ENCODE measurements at regions of chr2 and their contacts with region 1.

Region 1: GRCh38 chr2:48946449-48947048 is 191.0 kb upstream of the LHCGR start:
- DNase-seq: peak; percentile 54 to 77 (median 68)
- ATAC-seq: peak; percentile 93
- H3K4me3 ChIP-seq: no peak overlapping the region
- H3K27ac ChIP-seq: no peak overlapping the region
- H3K4me1 ChIP-seq: no peaks in the 10 kb centered on the region
- H3K27me3 ChIP-seq: no peaks in the 10 kb centered on the region
- CTCF ChIP-seq: peak; percentile 64 to 79 (median 78)
- EP300 ChIP-seq: no peak
- POLR2A ChIP-seq: no peak
- RAD21 ChIP-seq: peak; percentile 87 to 89

Region 2: GRCh38 chr2:50143822-50144575 is 1197.5 kb after region 1 on chr2:
- CTCF ChIA-PET with region 1: no interaction called
- POLR2A ChIA-PET with region 1: no interaction called
- in situ Hi-C with region 1: no loop called
- intact Hi-C with region 1: loop called (anchors 10 kb)
- DNase-seq: peak in 2 of 4 experiments; percentile 3 to 4
- ATAC-seq: no peak
- H3K4me3 ChIP-seq: no peak overlapping the region
- H3K27ac ChIP-seq: no peak overlapping the region
- H3K4me1 ChIP-seq: no peaks in the 10 kb centered on the region
- H3K27me3 ChIP-seq: no peaks in the 10 kb centered on the region
- CTCF ChIP-seq: peak in 2 of 3 experiments; percentile 11 to 13; a peak in 1 of 6 replicates
- EP300 ChIP-seq: no peak
- POLR2A ChIP-seq: no peak
- RAD21 ChIP-seq: peak in 1 of 2 experiments; percentile 29; a peak in 2 of 4 replicates

Region 3: DNA sequence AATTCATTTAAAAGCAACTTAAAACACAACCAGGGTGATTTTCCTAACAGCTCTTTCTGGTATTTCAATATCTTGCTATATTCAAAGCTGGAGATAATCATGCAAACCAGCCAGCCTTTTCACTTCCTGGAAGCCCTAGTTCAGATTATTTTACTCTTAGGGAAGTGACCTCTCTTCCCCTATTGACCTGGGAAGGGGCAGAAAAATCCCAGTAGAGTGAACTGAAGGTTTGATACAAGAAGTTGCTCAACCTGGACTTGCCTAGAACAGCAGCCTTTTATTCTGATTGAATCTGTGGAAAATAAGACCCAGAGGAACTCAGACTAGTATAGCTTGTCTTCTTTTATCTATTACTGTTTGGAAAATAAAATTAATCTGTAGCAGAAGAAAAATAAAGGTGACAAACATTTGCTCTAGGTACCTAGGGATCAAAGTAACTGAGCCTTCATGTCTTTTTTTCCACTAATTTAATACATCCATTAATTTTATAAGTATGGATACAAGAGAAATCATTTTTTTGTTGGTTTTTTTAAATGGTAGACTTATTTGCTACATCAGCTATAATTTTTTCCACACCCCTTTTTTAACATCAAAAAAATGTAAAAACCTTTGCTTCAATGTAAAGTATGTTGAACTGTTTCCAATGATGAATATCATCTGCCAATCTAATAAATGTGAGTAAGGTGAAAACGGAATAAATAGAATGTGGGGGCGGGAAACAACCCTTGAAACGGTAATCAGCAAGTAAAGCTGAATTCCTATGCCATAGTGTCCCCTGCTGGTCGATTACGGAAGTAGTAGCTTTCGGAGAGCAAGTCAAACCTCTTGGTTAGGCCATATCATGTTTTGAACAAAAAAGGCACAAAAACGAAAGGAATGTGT is 1455.5 kb after region 1 on chr2:
- CTCF ChIA-PET with region 1: no interaction called
- POLR2A ChIA-PET with region 1: no interaction called
- in situ Hi-C with region 1: no loop called
- intact Hi-C with region 1: loop called (anchors 2 kb)
- DNase-seq: peak; percentile 12 to 43 (median 23)
- ATAC-seq: no peak
- H3K4me3 ChIP-seq: no peak overlapping the region
- H3K27ac ChIP-seq: no peak overlapping the region
- H3K4me1 ChIP-seq: no peaks in the 10 kb centered on the region
- H3K27me3 ChIP-seq: no peaks in the 10 kb centered on the region
- CTCF ChIP-seq: peak; percentile 12 to 51 (median 49); a peak in 4 of 6 replicates
- EP300 ChIP-seq: no peak
- POLR2A ChIP-seq: no peak
- RAD21 ChIP-seq: peak; percentile 60 to 71

Region 4: GRCh38 chr2:50492477-50492851 is 1545.9 kb after region 1 on chr2:
- CTCF ChIA-PET with region 1: no interaction called
- POLR2A ChIA-PET with region 1: no interaction called
- in situ Hi-C with region 1: loop called (anchors 25 kb)
- intact Hi-C with region 1: loop called (anchors 2 kb)
- DNase-seq: peak; percentile 52 to 62 (median 58)
- ATAC-seq: peak; percentile 92
- H3K4me3 ChIP-seq: no peak overlapping the region
- H3K27ac ChIP-seq: no peak overlapping the region
- H3K4me1 ChIP-seq: no peaks in the 10 kb centered on the region
- H3K27me3 ChIP-seq: no peaks in the 10 kb centered on the region
- CTCF ChIP-seq: peak; percentile 29 to 72 (median 60); a peak in 5 of 6 replicates
- EP300 ChIP-seq: no peak
- POLR2A ChIP-seq: no peak
- RAD21 ChIP-seq: peak; percentile 62 to 70